Activated naive CD4-positive, alpha-beta T cell treated with anti-CD3 and anti-CD28 coated beads for 36 hours (primary cell): ENCODE measurements at regions of chr11 and their contacts with region 1.

Region 1: DNA sequence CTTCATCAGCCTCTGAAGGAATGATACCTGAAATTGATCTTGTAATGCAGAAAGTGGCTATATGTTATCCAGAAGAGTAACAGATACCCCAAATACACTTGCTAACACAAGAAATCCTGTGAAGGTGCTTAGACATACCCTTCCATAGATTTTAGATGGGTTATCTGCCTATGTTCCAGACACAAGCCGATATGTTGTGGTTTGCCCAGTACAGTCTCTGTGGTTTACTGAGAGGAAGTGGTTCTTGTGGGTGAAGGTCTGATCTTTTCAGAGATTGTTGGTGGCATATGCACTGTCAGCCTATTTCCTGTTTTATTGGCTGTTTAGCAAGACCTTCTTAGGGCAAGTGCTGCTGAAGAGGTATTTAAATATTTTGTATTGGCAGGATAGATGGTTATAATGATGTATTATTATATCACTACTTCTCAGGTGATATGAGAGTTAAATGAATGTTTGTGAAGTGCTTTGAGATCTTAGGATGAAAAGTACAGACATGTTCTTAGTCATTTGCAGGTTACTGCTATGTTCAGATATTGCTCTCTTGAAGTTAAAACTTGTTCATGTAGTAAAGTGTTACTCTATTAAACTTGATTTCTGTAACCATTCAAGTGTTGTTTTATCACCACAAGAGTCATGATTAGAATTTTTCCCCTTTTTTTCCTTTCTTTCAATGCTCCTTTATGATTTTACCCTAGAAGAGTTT is 8.2 kb downstream of the ARHGEF12 start:
- DNase-seq: peak; percentile 71
- H3K4me3 Mint-ChIP-seq: no peak overlapping the region
- H3K27ac Mint-ChIP-seq: no peak overlapping the region
- H3K4me1 Mint-ChIP-seq: peaks cover 35% of the 10 kb centered on the region
- H3K27me3 Mint-ChIP-seq: peaks cover 63% of the 10 kb centered on the region

Region 2: DNA sequence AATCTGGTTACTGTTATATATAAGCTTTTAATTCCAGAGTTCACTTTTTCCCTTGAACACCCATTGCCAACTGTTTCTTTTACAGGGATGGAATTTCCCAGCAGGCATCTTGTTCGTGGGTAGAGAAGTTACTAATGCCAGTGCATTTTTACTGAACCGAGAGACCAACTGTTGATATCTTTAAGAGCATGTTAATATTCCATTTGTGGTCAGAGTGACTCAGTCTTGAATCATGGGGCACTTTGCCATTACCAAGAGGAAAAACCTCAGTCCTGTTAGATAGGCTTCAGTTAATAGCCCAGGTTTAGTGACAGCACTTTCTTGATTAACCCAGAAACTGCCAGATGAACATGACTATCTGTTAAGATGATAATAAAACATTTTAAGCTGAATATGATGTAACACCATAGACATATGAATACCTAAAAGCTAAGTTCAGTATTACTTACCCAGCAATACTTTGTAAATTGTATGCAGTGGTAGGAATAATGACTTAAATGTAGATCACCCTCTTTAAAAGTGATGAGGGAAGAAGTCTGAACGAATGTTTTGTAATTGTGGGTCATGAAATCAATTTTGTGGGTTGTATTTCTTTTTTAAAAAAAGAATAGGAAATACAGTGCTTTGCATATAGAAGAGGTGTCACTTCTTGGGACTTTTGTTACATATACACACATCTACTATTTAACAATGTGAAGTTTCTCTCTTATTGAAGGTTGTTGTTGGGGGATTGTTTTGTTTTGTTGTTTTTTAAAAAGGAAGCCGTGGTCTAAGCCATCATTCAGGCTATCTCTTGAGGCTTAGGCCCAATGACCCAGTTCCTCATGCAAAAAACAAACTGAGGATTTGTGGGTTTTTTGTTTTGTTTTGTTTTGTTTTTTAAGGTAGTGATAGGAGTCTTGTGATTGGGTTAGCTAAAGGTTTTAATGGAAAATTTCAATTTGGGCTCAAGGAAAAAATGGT is 87.9 kb after region 1 on chr11:
- CTCF ChIA-PET with region 1: no interaction called
- intact Hi-C with region 1: loop called (anchors 1 kb)
- DNase-seq: peak; percentile 30
- H3K4me3 Mint-ChIP-seq: no peak overlapping the region
- H3K27ac Mint-ChIP-seq: peak overlapping the region; percentile 57
- H3K4me1 Mint-ChIP-seq: peaks cover 17% of the 10 kb centered on the region
- H3K27me3 Mint-ChIP-seq: no peaks in the 10 kb centered on the region